HCT116 (cell line): ENCODE measurements at regions of chr1 and their contacts with region 1.

Region 1: GRCh38 chr1:153095764-153096163 is 1.4 kb upstream of the SPRR2E start:
- DNase-seq: no peak
- ATAC-seq: no peak
- H3K4me3 ChIP-seq: no peak overlapping the region
- H3K27ac ChIP-seq: no peak overlapping the region
- H3K4me1 ChIP-seq: peaks cover 8 to 19% of the 10 kb centered on the region in 2 experiments; a peak in 3 of 4 replicates
- H3K27me3 ChIP-seq: no peaks in the 10 kb centered on the region
- CTCF ChIP-seq: no peak
- POLR2A ChIP-seq: no peak
- RAD21 ChIP-seq: no peak

Region 2: DNA sequence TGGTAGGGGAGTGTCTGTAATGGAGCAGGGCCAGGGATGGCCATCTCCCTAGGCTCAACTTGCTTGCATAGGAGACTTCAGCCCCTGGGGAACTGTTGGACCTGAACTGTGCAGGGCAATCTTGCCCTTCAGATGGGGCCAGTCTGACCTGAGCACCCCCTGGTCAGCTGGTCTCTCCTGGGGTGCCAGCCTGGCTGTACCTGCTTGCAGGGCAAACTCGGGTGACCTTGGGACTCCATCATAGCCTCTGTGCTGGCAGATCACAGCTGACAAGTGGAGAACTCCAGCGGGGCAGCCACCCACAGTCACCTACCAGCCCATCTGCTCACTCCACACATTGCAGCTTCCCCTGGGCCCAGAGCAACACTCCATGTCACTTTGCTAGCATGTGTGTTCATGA is 46.6 kb before region 1 on chr1:
- CTCF ChIA-PET with region 1: no interaction called
- POLR2A ChIA-PET with region 1: no interaction called
- RAD21 ChIA-PET with region 1: no interaction called
- intact Hi-C with region 1: no loop called
- DNase-seq: no peak
- ATAC-seq: no peak
- H3K4me3 ChIP-seq: no peak overlapping the region
- H3K27ac ChIP-seq: no peak overlapping the region
- H3K4me1 ChIP-seq: no peaks in the 10 kb centered on the region
- H3K27me3 ChIP-seq: peaks cover 34% of the 10 kb centered on the region
- CTCF ChIP-seq: no peak
- POLR2A ChIP-seq: no peak
- RAD21 ChIP-seq: no peak

Region 3: DNA sequence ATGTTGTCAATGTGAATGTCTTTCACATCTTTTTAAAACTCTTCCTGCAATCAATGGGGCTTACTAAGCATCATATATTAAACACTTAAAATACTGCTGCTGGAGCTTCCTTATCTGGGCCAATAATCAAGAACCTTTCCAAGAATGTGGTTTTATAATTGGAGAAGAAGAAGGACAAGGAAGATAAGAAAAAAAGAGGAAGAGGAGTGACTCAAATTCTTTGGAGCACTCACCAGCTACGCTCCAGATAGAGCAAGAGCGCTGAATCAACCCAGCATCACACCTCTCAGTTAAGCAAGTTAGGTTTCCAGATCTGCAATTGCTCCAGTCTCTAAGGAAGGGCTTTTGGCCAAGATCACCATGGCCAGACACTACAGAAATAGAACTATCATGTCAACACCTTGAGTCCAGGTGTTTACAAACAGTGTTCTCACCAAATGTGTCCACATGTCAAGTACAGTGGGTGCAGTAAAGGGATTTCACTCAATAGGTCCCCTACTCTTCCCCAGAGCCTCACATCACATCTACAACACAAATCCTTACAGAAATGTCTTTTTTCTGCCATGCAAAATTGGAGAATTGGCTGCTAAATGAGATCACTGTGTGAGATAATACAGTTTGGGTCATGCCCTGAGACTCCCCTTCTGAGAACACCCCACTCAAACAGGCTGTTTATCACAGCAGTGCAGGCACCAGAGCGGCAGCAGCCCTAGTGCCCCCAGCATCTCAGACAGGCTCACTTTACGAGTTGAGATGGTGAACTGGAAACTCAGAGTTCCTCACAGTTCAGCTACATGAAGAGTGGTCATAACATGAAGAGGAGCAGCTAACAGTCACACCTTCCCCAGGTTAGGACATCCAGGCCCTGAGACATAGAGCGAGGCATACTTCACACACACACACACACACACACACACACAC is 22.7 kb before region 1 on chr1:
- CTCF ChIA-PET with region 1: no interaction called
- POLR2A ChIA-PET with region 1: no interaction called
- RAD21 ChIA-PET with region 1: no interaction called
- intact Hi-C with region 1: loop called (anchors 1 kb)
- DNase-seq: no peak
- ATAC-seq: no peak
- H3K4me3 ChIP-seq: no peak overlapping the region
- H3K27ac ChIP-seq: no peak overlapping the region
- H3K4me1 ChIP-seq: no peaks in the 10 kb centered on the region
- H3K27me3 ChIP-seq: peaks cover 13% of the 10 kb centered on the region
- CTCF ChIP-seq: no peak
- POLR2A ChIP-seq: no peak
- RAD21 ChIP-seq: no peak

Region 4: DNA sequence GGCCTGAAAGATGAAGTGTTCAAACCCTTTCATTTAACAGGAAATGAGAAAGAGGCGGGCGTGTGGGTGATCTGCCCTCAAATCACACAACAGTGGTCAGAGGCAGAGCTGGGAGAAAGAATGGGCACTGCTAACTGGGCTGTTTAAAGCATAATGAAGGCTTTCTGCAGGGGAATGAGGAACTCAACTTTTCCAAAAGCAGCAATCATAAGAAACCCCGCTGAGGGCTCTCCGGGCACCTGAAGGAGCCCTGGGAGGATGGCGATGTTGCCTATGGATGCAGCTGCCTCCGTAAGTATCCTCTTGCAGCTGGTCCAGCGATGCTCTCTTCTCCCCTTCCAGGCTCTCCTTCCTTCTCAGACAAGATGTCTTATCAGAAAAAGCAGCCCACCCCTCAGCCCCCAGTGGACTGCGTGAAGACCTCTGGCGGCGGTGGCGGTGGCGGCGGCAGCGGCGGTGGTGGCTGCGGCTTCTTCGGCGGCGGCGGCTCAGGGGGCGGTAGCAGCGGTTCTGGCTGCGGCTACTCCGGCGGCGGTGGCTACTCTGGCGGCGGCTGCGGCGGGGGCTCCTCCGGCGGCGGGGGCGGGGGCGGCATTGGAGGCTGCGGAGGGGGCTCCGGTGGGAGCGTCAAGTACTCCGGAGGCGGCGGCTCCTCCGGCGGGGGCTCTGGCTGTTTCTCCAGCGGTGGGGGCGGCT is 165.0 kb after region 1 on chr1:
- CTCF ChIA-PET with region 1: no interaction called
- POLR2A ChIA-PET with region 1: no interaction called
- RAD21 ChIA-PET with region 1: no interaction called
- intact Hi-C with region 1: no loop called
- DNase-seq: no peak
- ATAC-seq: no peak
- H3K4me3 ChIP-seq: no peak overlapping the region
- H3K27ac ChIP-seq: no peak overlapping the region
- H3K4me1 ChIP-seq: no peaks in the 10 kb centered on the region
- H3K27me3 ChIP-seq: peaks cover 37% of the 10 kb centered on the region
- CTCF ChIP-seq: no peak
- POLR2A ChIP-seq: no peak
- RAD21 ChIP-seq: no peak